ENCODE measurements at regions of chr16 and their contacts with region 1.

Region 1: DNA sequence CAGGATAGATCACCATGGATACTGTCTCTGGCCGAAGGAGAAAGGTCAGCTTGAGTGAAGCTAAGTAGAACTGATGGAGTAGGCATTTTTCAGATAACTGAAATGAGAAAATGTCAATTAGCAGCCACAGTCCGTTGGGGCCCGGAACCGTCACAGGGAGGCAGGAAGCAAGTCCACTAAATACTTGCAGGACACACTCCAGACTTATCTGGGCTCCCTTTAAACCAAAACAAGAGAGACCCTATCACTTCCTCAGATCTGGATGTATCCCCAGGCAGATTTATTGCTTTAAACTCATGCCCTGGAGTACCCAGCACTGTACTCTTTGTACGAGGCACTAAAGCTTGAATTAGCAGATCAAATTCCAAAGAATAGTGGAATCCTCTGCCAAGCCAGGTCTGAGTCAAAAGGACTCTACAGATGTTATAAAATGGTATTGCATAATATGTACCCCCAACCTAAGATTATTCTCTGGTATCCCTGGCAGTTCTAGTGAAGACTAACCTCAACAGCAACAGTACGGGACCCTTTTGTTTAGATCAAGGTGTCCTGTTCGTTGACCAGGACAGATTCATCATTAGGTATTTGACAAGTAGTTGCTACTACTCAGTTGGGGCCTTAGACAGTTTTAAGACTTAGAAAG is 8.1 kb downstream of the ZP2 start:
- DNase-seq: no peak
- H3K4me3 ChIP-seq: no peak overlapping the region
- H3K27ac ChIP-seq: no peak overlapping the region
- H3K4me1 ChIP-seq: no peaks in the 10 kb centered on the region
- H3K27me3 ChIP-seq: no peaks in the 10 kb centered on the region
- CTCF ChIP-seq: no peak
- EP300 ChIP-seq: no peak
- POLR2A ChIP-seq: no peak
- RAD21 ChIP-seq: no peak

Region 2: GRCh38 chr16:21179126-21179982 is 23.9 kb before region 1 on chr16:
- CTCF ChIA-PET with region 1: no interaction called
- POLR2A ChIA-PET with region 1: no interaction called
- DNase-seq: no peak
- H3K4me3 ChIP-seq: no peak overlapping the region
- H3K27ac ChIP-seq: no peak overlapping the region
- H3K4me1 ChIP-seq: no peaks in the 10 kb centered on the region
- H3K27me3 ChIP-seq: no peaks in the 10 kb centered on the region
- CTCF ChIP-seq: no peak
- EP300 ChIP-seq: no peak
- POLR2A ChIP-seq: no peak
- RAD21 ChIP-seq: no peak

Region 3: DNA sequence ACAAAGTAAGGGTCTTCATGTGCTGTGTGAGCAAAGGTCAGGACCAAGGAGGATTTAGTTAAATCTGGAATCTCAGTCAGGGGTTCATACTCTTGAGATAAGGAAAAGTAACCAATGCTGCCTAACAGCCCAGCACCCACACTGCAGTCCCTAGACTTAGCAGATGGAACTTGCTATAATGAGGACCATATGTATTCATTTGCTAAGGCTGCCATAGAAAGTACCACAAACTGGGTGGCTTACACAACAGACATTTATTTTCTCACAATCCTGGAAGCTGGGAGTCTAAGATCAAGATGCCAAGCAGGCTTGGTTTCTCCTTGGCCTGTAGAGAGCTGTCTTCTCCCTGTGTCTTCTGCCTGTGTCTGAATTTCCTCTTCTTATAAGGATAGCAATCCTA is 12.7 kb before region 1 on chr16:
- CTCF ChIA-PET with region 1: interaction called, 23 read pairs
- POLR2A ChIA-PET with region 1: no interaction called
- DNase-seq: no peak
- H3K4me3 ChIP-seq: no peak overlapping the region
- H3K27ac ChIP-seq: no peak overlapping the region
- H3K4me1 ChIP-seq: no peaks in the 10 kb centered on the region
- H3K27me3 ChIP-seq: peaks cover 0 to 2% (median 0%) of the 10 kb centered on the region in 4 experiments; a peak in 2 of 7 replicates
- CTCF ChIP-seq: no peak
- EP300 ChIP-seq: no peak
- POLR2A ChIP-seq: no peak
- RAD21 ChIP-seq: no peak

Measured in H1 (cell line).